B cell (primary cell): ENCODE measurements at regions of chr5 and their contacts with region 1.

Region 1: GRCh38 chr5:131277875-131278740 is 14.3 kb downstream of the CDC42SE2 start:
- DNase-seq: no peak
- ATAC-seq: no peak
- H3K4me3 ChIP-seq: no peak overlapping the region
- H3K4me3 Mint-ChIP-seq: no peak overlapping the region
- H3K27ac ChIP-seq: peak overlapping the region in 1 of 2 donors; percentile 70
- H3K27ac Mint-ChIP-seq: peak overlapping the region; percentile 69
- H3K4me1 ChIP-seq: peaks cover 70 to 83% of the 10 kb centered on the region in 2 donors
- H3K4me1 Mint-ChIP-seq: peaks cover 78% of the 10 kb centered on the region
- H3K27me3 ChIP-seq: no peaks in the 10 kb centered on the region
- H3K27me3 Mint-ChIP-seq: no peaks in the 10 kb centered on the region
- CTCF ChIP-seq: no peak

Region 2: DNA sequence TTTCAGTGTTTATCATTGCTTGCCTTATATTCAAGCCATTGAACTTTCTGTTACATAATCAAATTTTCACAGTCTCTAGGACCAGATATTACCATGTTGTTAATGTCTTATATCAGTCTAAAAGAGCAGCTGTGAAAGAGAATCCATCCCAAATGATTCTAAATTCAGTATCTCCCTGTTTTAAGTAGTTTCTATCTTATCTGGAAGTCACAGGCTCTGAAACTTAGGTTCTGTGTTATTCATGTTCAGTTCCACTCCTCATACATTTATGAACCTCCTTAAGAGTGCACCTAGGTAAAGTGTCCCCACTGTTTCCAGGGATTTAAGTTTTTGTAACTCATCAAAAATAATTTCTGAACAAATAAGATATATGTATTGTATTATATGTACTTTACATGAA is 97.7 kb before region 1 on chr5:
- CTCF ChIA-PET with region 1: no interaction called
- POLR2A ChIA-PET with region 1: no interaction called
- intact Hi-C with region 1: no loop called
- DNase-seq: no peak
- ATAC-seq: no peak
- H3K4me3 ChIP-seq: no peak overlapping the region
- H3K4me3 Mint-ChIP-seq: no peak overlapping the region
- H3K27ac ChIP-seq: no peak overlapping the region
- H3K27ac Mint-ChIP-seq: no peak overlapping the region
- H3K4me1 ChIP-seq: no peaks in the 10 kb centered on the region
- H3K4me1 Mint-ChIP-seq: peaks cover 6% of the 10 kb centered on the region
- H3K27me3 ChIP-seq: no peaks in the 10 kb centered on the region
- H3K27me3 Mint-ChIP-seq: no peaks in the 10 kb centered on the region
- CTCF ChIP-seq: no peak

Region 3: DNA sequence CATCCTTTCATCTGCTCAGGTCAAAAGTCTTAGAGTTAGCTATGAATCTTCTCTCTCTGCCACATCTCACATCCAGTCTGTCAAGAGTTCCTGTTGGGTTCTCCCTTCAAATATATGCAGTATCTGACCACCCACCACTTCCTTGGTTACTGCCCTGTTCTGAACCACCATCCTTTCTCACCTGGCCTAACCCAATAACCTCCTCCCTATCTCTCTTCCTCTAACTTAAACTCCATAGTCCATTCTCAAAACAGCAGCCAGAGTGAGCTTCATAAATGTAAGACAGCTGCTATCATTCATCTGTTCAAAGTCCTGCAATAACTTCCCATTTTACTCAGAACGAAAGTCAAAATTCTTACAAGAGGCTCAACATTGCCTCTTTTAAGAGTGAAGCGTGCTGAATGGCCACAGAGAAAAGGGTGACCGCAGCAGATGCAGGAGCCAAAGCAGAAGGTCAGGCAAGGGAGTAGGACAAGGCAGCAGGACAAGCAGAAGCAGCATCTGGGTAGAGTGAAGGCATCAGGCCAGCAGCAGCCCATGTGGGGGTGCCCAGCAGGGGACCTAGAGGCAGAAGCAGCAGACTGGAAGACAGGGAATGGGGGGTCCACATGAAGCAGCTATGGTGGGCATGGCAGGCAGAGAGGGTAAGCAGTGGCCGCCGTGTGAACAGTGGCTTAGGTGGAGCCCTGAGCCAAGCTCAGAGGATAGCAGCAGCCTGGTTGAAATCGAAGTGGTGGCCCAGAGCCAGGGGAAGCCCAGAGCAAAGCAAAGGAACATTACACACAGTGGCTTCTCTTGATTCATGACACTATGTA is 53.5 kb before region 1 on chr5:
- CTCF ChIA-PET with region 1: no interaction called
- POLR2A ChIA-PET with region 1: no interaction called
- intact Hi-C with region 1: no loop called
- DNase-seq: peak; percentile 73
- ATAC-seq: peak; percentile 82
- H3K4me3 ChIP-seq: peak overlapping the region in 1 of 5 experiments; percentile 8
- H3K4me3 Mint-ChIP-seq: no peak overlapping the region
- H3K27ac ChIP-seq: peak overlapping the region; percentile 59 to 75
- H3K27ac Mint-ChIP-seq: no peak overlapping the region
- H3K4me1 ChIP-seq: peaks cover 48 to 51% of the 10 kb centered on the region in 2 donors
- H3K4me1 Mint-ChIP-seq: peaks cover 21% of the 10 kb centered on the region
- H3K27me3 ChIP-seq: no peaks in the 10 kb centered on the region
- H3K27me3 Mint-ChIP-seq: no peaks in the 10 kb centered on the region
- CTCF ChIP-seq: no peak

Region 4: DNA sequence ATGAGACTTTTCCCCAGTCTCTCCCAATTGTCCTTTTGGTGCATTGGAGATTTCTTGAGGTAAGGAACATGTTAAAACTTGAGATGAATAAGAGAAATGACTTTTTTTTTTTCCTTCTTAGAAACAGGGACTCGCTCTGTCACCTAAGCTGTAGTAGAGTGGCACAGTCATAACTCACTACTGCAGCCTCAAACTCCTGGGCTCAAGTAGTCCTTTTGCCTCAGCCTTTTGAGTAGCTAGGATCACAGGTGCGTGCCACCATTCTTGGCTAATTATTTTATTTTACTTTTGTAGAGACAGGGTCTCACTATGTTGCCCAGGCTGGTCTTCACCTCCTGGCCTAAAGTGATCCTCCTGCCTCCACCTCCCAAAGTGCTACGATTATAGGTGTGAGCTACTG is 11.6 kb after region 1 on chr5:
- CTCF ChIA-PET with region 1: interaction called, 3 read pairs
- POLR2A ChIA-PET with region 1: interaction called, 4 read pairs
- intact Hi-C with region 1: loop called (anchors 1 kb)
- DNase-seq: no peak
- ATAC-seq: no peak
- H3K4me3 ChIP-seq: no peak overlapping the region
- H3K4me3 Mint-ChIP-seq: peak overlapping the region; percentile 77
- H3K27ac ChIP-seq: peak overlapping the region; percentile 45 to 83
- H3K27ac Mint-ChIP-seq: peak overlapping the region; percentile 73
- H3K4me1 ChIP-seq: peaks cover 37 to 41% of the 10 kb centered on the region in 2 donors
- H3K4me1 Mint-ChIP-seq: peaks cover 55% of the 10 kb centered on the region
- H3K27me3 ChIP-seq: no peaks in the 10 kb centered on the region
- H3K27me3 Mint-ChIP-seq: no peaks in the 10 kb centered on the region
- CTCF ChIP-seq: no peak